ENCODE measurements at regions of chr5 and their contacts with region 1.

Region 1: DNA sequence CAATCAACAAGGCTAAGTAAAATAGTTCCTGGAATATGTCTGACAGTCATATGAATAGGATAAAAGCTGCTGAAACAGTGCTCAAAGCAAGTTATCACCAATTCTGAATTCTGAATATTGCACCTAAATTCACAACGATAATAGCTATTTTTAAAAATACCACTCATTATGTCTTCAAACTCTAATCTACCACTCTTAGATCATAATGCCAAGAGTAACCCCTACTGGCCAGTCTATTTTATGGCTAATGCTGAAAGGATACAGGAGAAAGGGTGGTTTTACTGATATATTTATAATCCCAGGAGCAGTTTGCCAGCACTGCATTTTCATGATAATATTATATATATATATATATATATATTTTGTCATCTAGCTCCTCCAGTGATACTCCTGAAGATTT is 232.8 kb downstream of the PDE4D start:
- DNase-seq: peak; percentile 36 to 65
- ATAC-seq: peak; percentile 64 to 70; a peak in 4 of 6 replicates
- H3K4me3 ChIP-seq: no peak overlapping the region
- H3K27ac ChIP-seq: peak overlapping the region; percentile 71 to 76
- H3K4me1 ChIP-seq: peaks cover 100% of the 10 kb centered on the region
- CTCF ChIP-seq: peak; percentile 75
- EP300 ChIP-seq: no peak
- POLR2A ChIP-seq: no peak
- RAD21 ChIP-seq: peak; percentile 87 to 90

Region 2: DNA sequence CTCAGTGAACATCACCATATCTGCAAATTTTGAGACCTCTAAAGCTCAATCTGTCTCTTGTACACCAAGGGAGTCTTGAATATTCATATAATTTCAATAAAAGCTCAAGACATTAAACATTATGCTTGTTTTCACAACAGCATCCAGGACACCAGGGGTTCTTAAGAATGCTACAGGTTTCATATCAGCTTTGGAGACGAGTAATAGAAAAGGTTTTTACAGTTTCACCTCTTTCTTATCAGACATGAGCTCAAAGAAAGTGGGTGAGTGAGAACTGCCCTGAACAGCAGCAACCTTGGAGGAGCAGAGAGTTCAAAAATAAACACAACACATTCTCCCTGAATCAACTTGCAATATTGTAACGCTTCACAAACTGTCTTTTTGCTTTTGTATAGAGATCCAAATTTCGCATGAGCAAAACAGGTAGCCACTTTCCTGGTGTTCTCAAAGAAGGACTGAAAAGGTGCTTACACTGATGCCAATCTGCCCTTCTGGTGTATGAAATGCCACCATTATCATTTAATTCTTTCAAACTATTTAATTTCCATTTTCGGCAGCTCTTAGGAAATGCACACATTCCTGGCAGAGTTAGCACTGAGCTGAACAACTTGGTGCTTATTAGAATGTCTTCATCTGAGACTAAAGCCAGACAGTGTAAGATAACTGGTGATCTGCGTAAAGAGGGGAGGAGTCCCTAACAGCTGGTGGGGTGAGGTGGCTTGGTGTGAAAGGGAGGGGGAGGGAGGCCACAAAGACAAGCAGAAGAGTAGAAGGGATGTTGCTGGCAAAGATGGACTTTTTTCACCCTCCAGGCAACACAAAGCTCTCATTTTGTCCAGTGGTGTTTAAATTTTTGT is 302.5 kb before region 1 on chr5:
- CTCF ChIA-PET with region 1: no interaction called
- POLR2A ChIA-PET with region 1: no interaction called
- DNase-seq: peak in 1 of 2 experiments; percentile 90
- ATAC-seq: peak; percentile 66 to 67
- H3K4me3 ChIP-seq: peak overlapping the region; percentile 0; the same call in 1 of the 3 replicates
- H3K27ac ChIP-seq: peak overlapping the region; percentile 86 to 99
- H3K4me1 ChIP-seq: peaks cover 95% of the 10 kb centered on the region
- CTCF ChIP-seq: no peak
- EP300 ChIP-seq: no peak
- POLR2A ChIP-seq: no peak
- RAD21 ChIP-seq: no peak

Region 3: GRCh38 chr5:59390074-59390659 is 270.6 kb before region 1 on chr5:
- CTCF ChIA-PET with region 1: interaction called, 20 read pairs
- POLR2A ChIA-PET with region 1: no interaction called
- DNase-seq: peak in 1 of 2 experiments; percentile 48
- ATAC-seq: no peak
- H3K4me3 ChIP-seq: no peak overlapping the region
- H3K27ac ChIP-seq: peak overlapping the region; percentile 51 to 64; a peak in 3 of 6 replicates
- H3K4me1 ChIP-seq: peaks cover 54% of the 10 kb centered on the region
- CTCF ChIP-seq: peak; percentile 81
- EP300 ChIP-seq: no peak
- POLR2A ChIP-seq: no peak
- RAD21 ChIP-seq: peak; percentile 71 to 86

Region 4: DNA sequence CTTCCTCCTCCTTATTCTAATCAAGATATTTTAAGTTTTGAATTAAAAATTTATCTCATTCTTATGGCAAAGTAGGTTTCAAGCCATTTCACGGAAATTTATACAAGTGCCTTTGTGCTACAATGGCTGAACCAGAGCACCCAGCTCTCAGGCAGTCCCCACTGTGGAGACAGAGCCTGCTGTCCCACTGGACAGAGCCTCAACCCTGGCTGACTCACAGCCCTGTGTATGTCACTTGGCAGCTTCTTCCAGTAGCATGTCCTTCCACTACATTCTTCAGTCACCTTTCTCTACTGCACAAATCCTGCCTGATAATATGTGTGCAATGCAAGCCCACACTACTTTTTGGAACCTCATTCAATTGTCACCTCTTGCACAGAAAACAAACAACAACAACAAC is 20.3 kb before region 1 on chr5:
- CTCF ChIA-PET with region 1: interaction called, 10 read pairs
- POLR2A ChIA-PET with region 1: no interaction called
- DNase-seq: no peak
- ATAC-seq: peak; percentile 88 to 93
- H3K4me3 ChIP-seq: no peak overlapping the region
- H3K27ac ChIP-seq: peak overlapping the region in 1 of 2 experiments; percentile 49; a peak in 2 of 6 replicates
- H3K4me1 ChIP-seq: peaks cover 48% of the 10 kb centered on the region
- CTCF ChIP-seq: no peak
- EP300 ChIP-seq: no peak
- POLR2A ChIP-seq: no peak
- RAD21 ChIP-seq: no peak

Region 5: GRCh38 chr5:60026161-60026560 is 365.4 kb after region 1 on chr5:
- CTCF ChIA-PET with region 1: no interaction called
- POLR2A ChIA-PET with region 1: no interaction called
- DNase-seq: peak; percentile 1 to 36
- ATAC-seq: peak in 1 of 2 experiments; percentile 52; a peak in 2 of 6 replicates
- H3K4me3 ChIP-seq: no peak overlapping the region
- H3K27ac ChIP-seq: 0 out of 6 replicates have a peak overlapping the region, but pooled peaks of 1 of the 2 experiments have one; percentile 12
- H3K4me1 ChIP-seq: peaks cover 7% of the 10 kb centered on the region; the same call in 2 of the 3 replicates
- CTCF ChIP-seq: no peak
- EP300 ChIP-seq: no peak
- POLR2A ChIP-seq: no peak
- RAD21 ChIP-seq: no peak

Measured in A549 (cell line).